ENCODE measurements at regions of chr3 and their contacts with region 1.

Region 1: GRCh38 chr3:38992117-38992760 is 59.5 kb downstream of the SCN11A start:
- DNase-seq: no peak
- H3K4me3 ChIP-seq: no peak overlapping the region
- H3K4me1 ChIP-seq: no peaks in the 10 kb centered on the region
- H3K27me3 ChIP-seq: peaks cover 6% of the 10 kb centered on the region; the same call in 1 of the 2 replicates

Region 2: DNA sequence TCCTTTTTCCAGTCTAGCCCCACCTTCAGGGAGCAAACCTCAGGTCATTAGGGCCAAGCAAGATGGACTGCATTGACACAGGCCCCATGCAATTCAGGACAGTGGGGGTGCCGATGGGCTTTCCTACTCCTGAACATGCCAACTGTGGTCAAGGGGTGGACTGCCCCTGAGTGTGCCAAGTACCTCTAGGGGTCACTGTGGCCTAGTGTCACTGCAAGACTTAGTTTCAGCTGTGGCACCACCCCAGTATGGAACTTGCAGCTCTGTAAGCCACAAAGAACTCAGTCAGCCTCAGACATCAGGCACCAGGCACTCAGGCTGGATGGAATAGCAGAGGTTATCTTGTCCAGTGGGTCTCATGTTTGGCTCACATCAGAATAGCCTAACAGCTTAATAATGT is 463.8 kb before region 1 on chr3:
- in situ Hi-C with region 1: loop called (anchors 25 kb)
- DNase-seq: no peak
- H3K4me3 ChIP-seq: no peak overlapping the region
- H3K4me1 ChIP-seq: no peaks in the 10 kb centered on the region
- H3K27me3 ChIP-seq: no peaks in the 10 kb centered on the region

Region 3: GRCh38 chr3:39180546-39181346 is 188.5 kb after region 1 on chr3:
- in situ Hi-C with region 1: no loop called
- DNase-seq: peak; percentile 82 to 91
- H3K4me3 ChIP-seq: peak overlapping the region; percentile 27
- H3K4me1 ChIP-seq: peaks cover 15% of the 10 kb centered on the region
- H3K27me3 ChIP-seq: no peaks in the 10 kb centered on the region

Region 4: DNA sequence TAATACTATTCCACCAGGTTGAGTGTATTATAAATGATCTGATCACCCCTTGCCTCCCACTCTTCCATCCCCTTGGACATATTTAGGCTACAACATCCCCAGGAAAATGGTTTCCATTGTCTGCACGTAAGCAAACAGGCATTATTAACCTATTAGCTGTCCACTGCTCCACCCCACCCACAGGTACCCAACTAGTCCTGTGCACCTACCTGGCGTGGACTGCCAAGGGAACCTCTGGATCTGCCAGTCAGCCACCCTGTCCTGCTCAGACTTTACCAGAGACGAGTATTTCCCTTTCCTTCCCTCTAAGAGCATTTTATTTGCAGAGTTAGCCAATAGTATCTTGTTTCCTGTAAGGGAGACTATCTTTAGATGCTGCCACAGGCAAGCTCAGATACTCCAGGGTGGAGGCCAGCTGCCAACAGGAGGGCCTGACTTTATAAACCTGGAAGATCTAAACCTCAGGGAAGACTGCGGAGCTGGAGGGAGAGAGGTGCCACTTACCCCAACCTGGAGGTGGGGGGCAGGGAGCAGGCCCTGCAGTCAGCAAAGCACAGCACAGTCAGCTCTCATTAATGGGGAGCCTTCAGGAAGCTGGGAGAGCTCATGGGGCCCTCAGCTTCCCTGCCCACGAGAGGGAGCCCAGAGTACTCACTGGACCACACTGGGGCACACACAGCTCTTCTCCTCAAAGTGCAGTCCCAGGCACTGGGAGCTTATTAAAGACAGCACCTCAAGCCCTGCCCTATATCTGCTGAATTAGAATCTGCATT is 287.7 kb after region 1 on chr3 and contains the start of gene CX3CR1:
- in situ Hi-C with region 1: no loop called
- DNase-seq: no peak
- H3K4me3 ChIP-seq: no peak within 1 kb of the TSS
- H3K4me1 ChIP-seq: no peaks in the 10 kb centered on the region
- H3K27me3 ChIP-seq: peaks cover 2% of the 10 kb centered on the region; the same call in 1 of the 2 replicates